ENCODE measurements at regions of chr2 and their contacts with region 1.

Region 1: DNA sequence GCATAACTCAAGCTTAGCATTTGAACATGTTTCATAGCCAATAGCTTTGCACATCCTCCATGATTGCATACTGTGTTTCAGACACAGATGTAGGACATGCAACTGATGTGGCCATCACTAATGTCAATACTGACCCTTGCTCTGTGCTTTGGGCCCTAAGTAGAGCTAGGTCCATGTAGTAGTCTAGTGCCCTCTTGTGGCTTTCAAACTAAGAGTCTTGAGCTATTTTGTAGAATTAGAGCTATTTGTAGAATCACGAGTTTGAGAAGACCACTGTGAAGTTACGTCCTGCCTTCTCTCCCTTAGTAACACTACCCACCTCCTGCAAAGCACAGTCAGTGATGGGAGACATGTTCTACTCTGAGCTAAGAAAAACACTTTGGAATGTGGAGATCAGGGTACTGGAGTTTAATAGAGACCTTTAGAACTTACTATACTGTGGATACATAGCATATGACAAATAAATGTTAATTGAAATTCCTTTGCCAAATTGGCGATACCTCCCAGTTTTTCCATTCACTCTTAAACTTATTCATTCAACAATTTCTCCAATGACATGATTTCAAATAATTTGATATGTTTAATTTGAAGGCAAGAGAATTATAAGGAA is 306.5 kb upstream of the TNP1 start:
- DNase-seq: peak in 1 of 2 experiments; percentile 4
- H3K4me3 ChIP-seq: no peak overlapping the region
- H3K27ac ChIP-seq: no peak overlapping the region
- H3K4me1 ChIP-seq: peaks cover 14% of the 10 kb centered on the region; the same call in 1 of the 2 replicates
- H3K27me3 ChIP-seq: no peaks in the 10 kb centered on the region
- CTCF ChIP-seq: peak; percentile 67

Region 2: GRCh38 chr2:216681683-216682082 is 484.7 kb before region 1 on chr2:
- CTCF ChIA-PET with region 1: interaction called, 10 read pairs
- POLR2A ChIA-PET with region 1: no interaction called
- intact Hi-C with region 1: no loop called
- DNase-seq: no peak
- H3K4me3 ChIP-seq: no peak overlapping the region
- H3K27ac ChIP-seq: 0 out of 2 replicates have a peak overlapping the region, but pooled peaks have one; percentile 10
- H3K4me1 ChIP-seq: peaks cover 17% of the 10 kb centered on the region
- H3K27me3 ChIP-seq: no peaks in the 10 kb centered on the region
- CTCF ChIP-seq: no peak

Region 3: GRCh38 chr2:216777650-216778273 is 388.6 kb before region 1 on chr2:
- CTCF ChIA-PET with region 1: interaction called, 6 read pairs
- POLR2A ChIA-PET with region 1: no interaction called
- intact Hi-C with region 1: loop called (anchors 5 kb)
- DNase-seq: peak; percentile 21 to 57
- H3K4me3 ChIP-seq: no peak overlapping the region
- H3K27ac ChIP-seq: no peak overlapping the region
- H3K4me1 ChIP-seq: peaks cover 13% of the 10 kb centered on the region
- H3K27me3 ChIP-seq: no peaks in the 10 kb centered on the region
- CTCF ChIP-seq: peak; percentile 61

Region 4: GRCh38 chr2:217434181-217434975 is 268.0 kb after region 1 on chr2:
- CTCF ChIA-PET with region 1: no interaction called
- POLR2A ChIA-PET with region 1: interaction called, 14 read pairs
- intact Hi-C with region 1: no loop called
- DNase-seq: peak; percentile 52 to 73
- H3K4me3 ChIP-seq: no peak overlapping the region
- H3K27ac ChIP-seq: no peak overlapping the region
- H3K4me1 ChIP-seq: no peaks in the 10 kb centered on the region
- H3K27me3 ChIP-seq: no peaks in the 10 kb centered on the region
- CTCF ChIP-seq: no peak

Measured in PC-9 (cell line).